ENCODE measurements at regions of chr2 and their contacts with region 1.

Region 1: GRCh38 chr2:26735096-26735495 is 29.0 kb upstream of the SLC35F6 start:
- DNase-seq: peak in 2 of 3 donors; percentile 34 to 45
- H3K4me3 ChIP-seq: no peak overlapping the region
- H3K27ac ChIP-seq: no peak overlapping the region
- H3K4me1 ChIP-seq: peaks cover 0 to 3% (median 2%) of the 10 kb centered on the region in 4 experiments
- H3K27me3 ChIP-seq: peaks cover 0 to 52% (median 18%) of the 10 kb centered on the region in 5 experiments

Region 2: DNA sequence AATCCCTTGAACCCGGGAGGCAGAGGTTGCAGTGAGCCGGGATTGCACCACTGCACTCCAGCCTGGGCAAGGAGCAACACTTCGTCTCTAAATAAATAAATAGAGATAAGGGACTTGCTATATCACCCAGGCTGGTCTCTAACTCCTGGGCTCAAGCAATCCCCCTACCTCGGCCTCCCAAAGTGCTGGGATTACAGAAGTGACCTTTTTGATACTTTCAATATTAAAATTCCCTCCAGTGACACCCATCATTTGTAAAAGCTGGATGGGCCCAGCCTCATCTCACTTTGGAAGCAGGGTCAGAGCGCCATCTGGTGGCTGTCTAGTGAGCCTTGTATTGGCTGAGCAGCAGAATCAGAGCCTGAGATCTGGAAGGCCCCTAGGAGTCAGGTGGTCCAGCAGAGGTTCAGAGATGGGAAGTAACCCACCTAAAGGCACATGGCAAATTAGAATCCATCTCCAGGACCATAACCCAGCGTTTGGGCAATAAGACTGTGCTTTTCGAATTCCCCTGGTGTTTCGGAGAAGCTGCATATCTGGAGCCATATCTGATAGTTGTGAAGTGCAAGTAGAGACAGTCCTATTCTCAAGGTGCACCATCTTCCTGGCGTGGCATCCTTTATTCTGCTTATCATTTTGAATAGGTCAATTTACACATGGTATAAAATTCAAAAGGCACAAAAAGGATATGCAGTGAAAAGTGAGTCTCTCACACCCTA is 10.7 kb after region 1 on chr2:
- CTCF ChIA-PET with region 1: interaction called, 11 read pairs
- POLR2A ChIA-PET with region 1: no interaction called
- DNase-seq: peak; percentile 83 to 91 (median 87)
- H3K4me3 ChIP-seq: no peak overlapping the region
- H3K27ac ChIP-seq: no peak overlapping the region
- H3K4me1 ChIP-seq: peaks cover 0 to 22% (median 20%) of the 10 kb centered on the region in 4 experiments
- H3K27me3 ChIP-seq: peaks cover 0 to 8% (median 4%) of the 10 kb centered on the region in 5 experiments

Measured in common myeloid progenitor, CD34-positive (primary cell).